K562 (cell line): ENCODE measurements at regions of chr7 and their contacts with region 1.

Region 1: GRCh38 chr7:1853986-1854865 is 184.1 kb downstream of the ELFN1 start:
- DNase-seq: peak in 1 of 4 experiments; percentile 37
- ATAC-seq: peak; percentile 14
- H3K4me3 ChIP-seq: peak overlapping the region; percentile 56
- H3K27ac ChIP-seq: peak overlapping the region; percentile 89
- H3K4me1 ChIP-seq: peaks cover 33 to 100% of the 10 kb centered on the region in 2 experiments
- H3K27me3 ChIP-seq: no peaks in the 10 kb centered on the region
- CTCF ChIP-seq: no peak
- EP300 ChIP-seq: no peak
- POLR2A ChIP-seq: 0 out of 2 replicates have a peak, but pooled peaks have one; percentile 6
- RAD21 ChIP-seq: no peak

Region 2: DNA sequence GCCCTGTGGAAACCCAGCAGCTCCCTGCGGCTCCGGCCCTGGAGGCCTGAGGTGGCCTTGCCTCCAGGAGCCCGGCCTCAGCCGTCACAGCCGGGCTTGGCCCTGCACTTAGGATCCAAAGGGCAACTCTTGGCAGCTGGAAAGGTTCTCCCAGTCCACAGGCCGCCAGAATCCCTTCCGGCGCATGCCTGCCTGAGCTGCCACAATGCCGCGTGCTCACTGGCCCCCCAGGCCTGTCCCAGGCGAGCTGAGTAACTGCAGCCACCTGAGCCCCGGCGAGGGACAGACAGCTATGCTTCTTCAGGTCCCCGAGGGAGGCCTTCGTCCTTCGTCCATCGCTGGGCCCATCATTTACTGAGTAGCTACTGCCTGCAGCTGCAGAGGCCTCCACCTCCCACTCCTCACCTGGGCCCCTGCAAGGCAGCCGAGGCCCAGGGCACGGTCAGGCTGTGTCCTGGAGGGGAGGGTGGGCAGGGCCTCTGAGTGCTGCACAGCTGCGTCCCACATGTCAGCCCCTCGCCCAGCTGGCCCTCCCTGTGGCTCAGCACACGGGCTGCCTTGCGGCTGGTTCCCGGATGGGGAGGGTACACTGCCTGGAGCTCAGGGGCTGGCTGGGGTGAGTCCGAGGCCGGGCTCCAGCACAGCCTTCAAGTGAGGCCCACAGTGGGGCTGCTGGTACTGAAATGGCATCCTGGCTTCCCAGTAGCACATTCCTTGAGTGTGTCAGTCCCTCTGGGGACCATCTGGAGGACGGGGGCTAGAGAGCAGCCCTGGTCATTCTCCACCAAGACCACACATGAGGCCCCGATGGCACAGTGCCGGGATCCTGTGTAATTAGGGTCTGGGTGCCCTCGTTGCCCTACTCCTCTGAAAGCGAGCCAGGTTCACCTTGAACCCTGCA is 11.7 kb before region 1 on chr7:
- CTCF ChIA-PET with region 1: no interaction called
- POLR2A ChIA-PET with region 1: interaction called, 11 read pairs
- in situ Hi-C with region 1: no loop called
- intact Hi-C with region 1: no loop called
- DNase-seq: no peak
- ATAC-seq: peak; percentile 32
- H3K4me3 ChIP-seq: no peak overlapping the region
- H3K27ac ChIP-seq: no peak overlapping the region
- H3K4me1 ChIP-seq: peaks cover 0 to 60% of the 10 kb centered on the region in 2 experiments; a peak in 2 of 5 replicates
- H3K27me3 ChIP-seq: no peaks in the 10 kb centered on the region
- CTCF ChIP-seq: no peak
- EP300 ChIP-seq: no peak
- POLR2A ChIP-seq: no peak
- RAD21 ChIP-seq: no peak

Region 3: DNA sequence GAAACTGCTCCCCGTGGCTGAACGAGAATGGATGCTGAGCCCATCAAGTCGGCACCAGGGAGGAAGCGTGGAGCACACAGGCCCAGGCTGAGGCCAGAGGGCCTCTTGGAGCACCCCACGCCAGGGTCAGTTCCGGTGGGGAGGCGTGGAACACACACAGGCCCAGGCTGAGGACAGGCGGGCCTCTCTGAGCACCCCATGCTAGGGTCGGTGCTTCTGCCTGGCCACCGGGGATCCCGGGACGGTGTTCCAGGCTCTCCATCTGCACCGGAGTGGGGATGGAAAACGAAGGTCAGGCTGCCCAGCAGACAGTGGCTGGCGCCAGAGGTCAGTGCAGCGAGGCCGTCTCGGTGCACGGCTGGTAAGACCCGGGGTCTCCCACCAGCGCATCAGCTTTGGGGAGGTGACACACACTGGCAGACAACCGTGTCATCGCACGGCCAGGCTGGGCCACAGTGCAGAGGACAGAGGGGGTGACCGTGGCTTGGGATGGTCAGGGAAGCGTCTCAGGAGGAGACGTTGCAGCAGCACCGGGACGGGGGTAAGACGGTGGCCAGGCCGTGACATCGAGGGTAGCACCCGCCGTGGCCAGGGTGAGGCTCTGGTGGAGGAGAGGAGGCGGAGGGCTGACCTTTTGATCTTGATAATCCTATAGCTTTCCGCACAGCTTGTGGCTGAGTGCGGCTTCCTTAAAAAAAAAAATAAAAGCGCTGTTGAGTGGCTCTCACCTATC is 19.8 kb after region 1 on chr7:
- CTCF ChIA-PET with region 1: no interaction called
- POLR2A ChIA-PET with region 1: interaction called, 3 read pairs
- in situ Hi-C with region 1: no loop called
- intact Hi-C with region 1: loop called (anchors 2 kb)
- DNase-seq: no peak
- ATAC-seq: no peak; the same call in 2 of the 3 replicates
- H3K4me3 ChIP-seq: no peak overlapping the region
- H3K27ac ChIP-seq: no peak overlapping the region
- H3K4me1 ChIP-seq: peaks cover 15 to 52% of the 10 kb centered on the region in 2 experiments
- H3K27me3 ChIP-seq: no peaks in the 10 kb centered on the region
- CTCF ChIP-seq: no peak
- EP300 ChIP-seq: no peak
- POLR2A ChIP-seq: no peak
- RAD21 ChIP-seq: no peak

Region 4: DNA sequence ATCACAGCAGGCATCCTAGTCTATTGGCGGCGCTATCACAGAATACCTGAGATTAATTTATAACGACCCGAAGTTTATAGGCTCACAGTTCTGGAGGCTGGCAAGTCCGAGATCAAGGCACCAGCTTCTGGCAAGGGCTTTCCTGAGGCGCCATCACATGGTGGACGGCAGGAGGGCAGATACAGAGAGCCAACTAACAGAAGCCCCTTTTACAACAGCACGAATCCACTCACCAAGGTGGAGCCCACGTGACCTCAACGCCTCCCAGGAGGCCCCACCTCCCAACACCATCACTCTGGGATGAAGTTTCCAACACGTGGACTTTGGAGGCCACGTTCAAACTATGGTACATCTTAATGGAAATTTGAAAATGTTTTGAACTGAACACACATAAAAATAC is 71.1 kb after region 1 on chr7:
- CTCF ChIA-PET with region 1: no interaction called
- POLR2A ChIA-PET with region 1: no interaction called
- in situ Hi-C with region 1: no loop called
- intact Hi-C with region 1: loop called (anchors 2 kb)
- DNase-seq: peak in 3 of 4 experiments; percentile 31 to 34 (median 33)
- ATAC-seq: peak; percentile 77
- H3K4me3 ChIP-seq: no peak overlapping the region
- H3K27ac ChIP-seq: no peak overlapping the region
- H3K4me1 ChIP-seq: peaks cover 15 to 22% of the 10 kb centered on the region in 2 experiments; a peak in 4 of 5 replicates
- H3K27me3 ChIP-seq: no peaks in the 10 kb centered on the region
- CTCF ChIP-seq: peak in 2 of 3 experiments; percentile 36 to 40; a peak in 3 of 6 replicates
- EP300 ChIP-seq: no peak
- POLR2A ChIP-seq: no peak
- RAD21 ChIP-seq: peak; percentile 14 to 52; a peak in 3 of 4 replicates

Region 5: GRCh38 chr7:2019607-2020511 is 165.6 kb after region 1 on chr7:
- CTCF ChIA-PET with region 1: no interaction called
- POLR2A ChIA-PET with region 1: no interaction called
- in situ Hi-C with region 1: no loop called
- intact Hi-C with region 1: loop called (anchors 1 kb)
- DNase-seq: peak; percentile 87 to 97 (median 94)
- ATAC-seq: peak; percentile 86
- H3K4me3 ChIP-seq: no peak overlapping the region
- H3K27ac ChIP-seq: peak overlapping the region; percentile 97
- H3K4me1 ChIP-seq: peaks cover 51 to 62% of the 10 kb centered on the region in 2 experiments
- H3K27me3 ChIP-seq: no peaks in the 10 kb centered on the region
- CTCF ChIP-seq: no peak
- EP300 ChIP-seq: peak; percentile 23; the same call in 1 of the 2 replicates
- POLR2A ChIP-seq: peak; percentile 75
- RAD21 ChIP-seq: no peak; a peak in 1 of 4 replicates

Region 6: DNA sequence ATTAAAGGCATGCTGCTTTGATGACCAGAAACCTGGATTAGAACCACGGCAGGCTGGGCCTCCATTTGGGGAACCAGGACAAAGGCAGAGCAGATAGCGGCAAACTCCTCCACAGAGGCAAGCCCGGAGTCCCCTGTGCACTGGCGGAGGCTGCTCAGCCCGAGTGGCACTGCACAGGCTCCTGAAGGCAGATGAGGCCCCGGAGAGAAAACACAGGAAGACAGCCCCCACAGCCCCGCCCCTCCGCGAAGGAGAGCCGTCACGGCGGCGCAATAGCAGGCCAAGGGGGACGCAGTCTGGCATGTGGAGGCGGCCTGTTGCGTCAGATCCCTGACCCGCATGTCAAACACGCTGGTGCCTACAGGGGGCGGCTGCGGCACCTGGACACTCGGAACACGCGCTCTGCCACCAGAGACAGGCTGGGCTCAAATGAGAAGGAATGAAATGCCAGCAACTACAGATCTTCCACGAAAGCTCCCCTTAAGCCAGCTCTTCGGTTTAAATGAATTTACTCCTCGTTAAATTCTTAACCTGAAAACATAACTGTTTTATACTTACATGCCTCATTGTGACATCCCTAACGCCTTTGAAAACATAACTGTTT is 250.0 kb after region 1 on chr7:
- CTCF ChIA-PET with region 1: no interaction called
- POLR2A ChIA-PET with region 1: no interaction called
- in situ Hi-C with region 1: no loop called
- intact Hi-C with region 1: loop called (anchors 10 kb)
- DNase-seq: peak; percentile 95 to 97 (median 96)
- ATAC-seq: peak; percentile 89
- H3K4me3 ChIP-seq: no peak overlapping the region
- H3K27ac ChIP-seq: peak overlapping the region; percentile 82
- H3K4me1 ChIP-seq: peaks cover 48 to 78% of the 10 kb centered on the region in 2 experiments
- H3K27me3 ChIP-seq: no peaks in the 10 kb centered on the region; a peak in 1 of 5 replicates
- CTCF ChIP-seq: peak; percentile 84 to 93 (median 88)
- EP300 ChIP-seq: peak; percentile 69
- POLR2A ChIP-seq: peak; percentile 65
- RAD21 ChIP-seq: peak; percentile 76 to 78